Aorta (tissue), 5 donors: ENCODE measurements at regions of chr5 and their contacts with region 1.

Region 1: GRCh38 chr5:110441035-110441434 is 285.4 kb downstream of the TMEM232 start:
- DNase-seq: no peak
- ATAC-seq: no peak
- H3K4me3 ChIP-seq: no peak overlapping the region
- H3K27ac ChIP-seq: no peak overlapping the region
- H3K4me1 ChIP-seq: peaks cover 0 to 4% of the 10 kb centered on the region in 2 donors
- H3K27me3 ChIP-seq: no peaks in the 10 kb centered on the region

Region 2: GRCh38 chr5:110623874-110624273 is 182.8 kb after region 1 on chr5:
- intact Hi-C with region 1: loop called in 1 of 2 experiments (anchors 5 kb)
- DNase-seq: no peak
- ATAC-seq: no peak
- H3K4me3 ChIP-seq: no peak overlapping the region
- H3K27ac ChIP-seq: no peak overlapping the region
- H3K4me1 ChIP-seq: no peaks in the 10 kb centered on the region
- H3K27me3 ChIP-seq: no peaks in the 10 kb centered on the region